Activated T-helper 1 cell treated with anti-CD3 and anti-CD28 coated beads, Interleukin-12 subunit alpha, Interleukin-12 subunit beta, Interleukin-2, Interleukin-4 antibody, amounts not matched to agents 30 ng/mL and 10 ng/mL and 1 ng/mL, durations not matched to agents 14 hours and 24 hours and 36 hours (primary cell): ENCODE measurements at regions of chr19 and their contacts with region 1.

Region 1: DNA sequence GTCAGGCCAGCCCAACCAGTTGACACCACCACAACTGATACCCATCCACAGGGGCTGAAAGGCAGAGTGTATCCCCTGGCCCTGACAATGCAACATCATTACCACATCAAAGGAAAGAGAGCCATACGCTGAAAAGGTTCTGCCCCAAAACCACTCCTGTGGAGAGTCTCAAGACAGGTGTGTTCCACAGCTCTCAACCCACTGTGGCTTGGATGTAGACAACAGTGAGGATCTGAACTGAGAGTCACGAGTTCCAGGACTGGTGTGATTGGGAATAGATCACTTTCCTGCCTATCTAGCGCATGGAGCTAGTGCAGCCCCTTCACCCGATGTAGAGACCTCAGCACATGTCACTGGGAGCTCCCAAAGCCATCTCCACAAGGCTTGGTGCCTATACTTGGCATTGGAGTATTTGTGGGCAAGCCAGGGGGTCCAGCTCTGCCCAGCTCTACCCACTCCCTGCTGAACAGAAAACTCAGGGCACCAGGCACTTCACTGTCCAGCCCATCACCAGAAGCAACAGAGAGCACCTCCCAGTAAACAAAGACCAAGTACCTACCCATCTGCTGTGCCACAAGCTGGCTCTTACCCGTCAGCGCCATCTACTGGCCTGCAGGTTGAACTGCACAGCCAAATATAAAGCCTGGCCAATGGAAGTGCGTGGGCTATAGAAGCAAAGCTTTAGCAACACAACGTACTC is 579.5 kb downstream of the UQCRFS1 start:
- DNase-seq: peak; percentile 56
- H3K4me3 Mint-ChIP-seq: no peak overlapping the region
- H3K27ac Mint-ChIP-seq: no peak overlapping the region
- H3K4me1 Mint-ChIP-seq: peaks cover 13% of the 10 kb centered on the region
- H3K27me3 Mint-ChIP-seq: peaks cover 2% of the 10 kb centered on the region

Region 2: GRCh38 chr19:27966390-27966816 is 667.1 kb before region 1 on chr19:
- intact Hi-C with region 1: loop called (anchors 1 kb)
- DNase-seq: no peak
- H3K4me3 Mint-ChIP-seq: no peak overlapping the region
- H3K27ac Mint-ChIP-seq: no peak overlapping the region
- H3K4me1 Mint-ChIP-seq: no peaks in the 10 kb centered on the region
- H3K27me3 Mint-ChIP-seq: peaks cover 10% of the 10 kb centered on the region

Region 3: DNA sequence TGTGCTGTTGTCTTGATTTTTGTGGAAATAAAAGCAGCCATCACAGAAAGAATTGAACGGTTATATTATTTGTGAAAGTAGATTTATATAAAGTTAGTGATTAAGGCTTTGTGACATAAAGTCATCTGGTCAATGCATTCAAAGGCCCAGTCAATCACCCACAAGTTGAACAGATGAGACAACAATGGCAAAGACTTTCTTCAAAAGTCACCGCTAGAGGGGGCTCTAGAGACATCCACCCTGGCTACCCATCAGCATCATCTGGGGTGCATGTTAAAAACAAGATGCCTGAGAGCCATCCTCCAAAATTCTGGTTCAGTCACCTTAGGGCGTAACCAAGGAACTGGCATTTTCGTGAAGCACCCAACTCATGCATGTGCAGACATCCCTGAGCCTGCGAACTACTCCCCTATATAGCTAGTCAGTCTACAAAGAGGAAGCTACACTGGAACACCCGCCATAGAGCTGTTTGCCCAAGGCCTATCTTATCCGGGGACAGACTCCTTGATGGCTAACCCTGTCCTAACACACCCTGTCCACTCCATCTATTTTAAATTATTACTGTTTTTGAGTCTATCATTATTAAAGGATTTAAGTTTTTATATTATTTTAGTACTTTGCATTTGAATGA is 391.1 kb before region 1 on chr19:
- intact Hi-C with region 1: loop called (anchors 1 kb)
- DNase-seq: peak; percentile 26
- H3K4me3 Mint-ChIP-seq: no peak overlapping the region
- H3K27ac Mint-ChIP-seq: no peak overlapping the region
- H3K4me1 Mint-ChIP-seq: peaks cover 6% of the 10 kb centered on the region
- H3K27me3 Mint-ChIP-seq: peaks cover 2% of the 10 kb centered on the region

Region 4: GRCh38 chr19:28386066-28386465 is 247.4 kb before region 1 on chr19:
- intact Hi-C with region 1: loop called (anchors 10 kb)
- DNase-seq: no peak
- H3K4me3 Mint-ChIP-seq: peak overlapping the region; percentile 75
- H3K27ac Mint-ChIP-seq: peak overlapping the region; percentile 86
- H3K4me1 Mint-ChIP-seq: peaks cover 73% of the 10 kb centered on the region
- H3K27me3 Mint-ChIP-seq: no peaks in the 10 kb centered on the region

Region 5: GRCh38 chr19:28466107-28467045 is 167.1 kb before region 1 on chr19:
- intact Hi-C with region 1: loop called (anchors 1 kb)
- DNase-seq: peak; percentile 52
- H3K4me3 Mint-ChIP-seq: no peak overlapping the region
- H3K27ac Mint-ChIP-seq: peak overlapping the region; percentile 68
- H3K4me1 Mint-ChIP-seq: peaks cover 75% of the 10 kb centered on the region
- H3K27me3 Mint-ChIP-seq: no peaks in the 10 kb centered on the region

Region 6: DNA sequence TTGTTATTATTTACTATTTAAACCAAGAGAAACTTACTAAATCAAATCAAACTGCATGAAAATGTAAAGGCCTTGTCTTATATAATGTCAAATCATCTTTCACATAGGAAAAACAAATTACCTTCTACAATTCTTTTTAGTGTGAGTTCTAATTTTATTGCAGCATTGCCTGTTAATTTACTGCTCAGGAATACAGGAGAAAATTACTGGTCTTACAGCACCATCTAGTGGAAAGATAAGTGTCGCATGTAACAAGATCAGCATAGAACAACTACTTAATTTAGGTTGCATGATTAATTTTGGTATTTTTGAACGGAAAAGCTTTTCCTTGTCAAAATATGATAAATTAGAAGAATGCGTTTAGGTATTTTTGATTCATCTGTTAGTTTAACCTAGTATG is 76.8 kb after region 1 on chr19:
- intact Hi-C with region 1: loop called (anchors 2 kb)
- DNase-seq: no peak
- H3K4me3 Mint-ChIP-seq: no peak overlapping the region
- H3K27ac Mint-ChIP-seq: no peak overlapping the region
- H3K4me1 Mint-ChIP-seq: no peaks in the 10 kb centered on the region
- H3K27me3 Mint-ChIP-seq: no peaks in the 10 kb centered on the region